ENCODE measurements at regions of chr19 and their contacts with region 1.

Region 1: DNA sequence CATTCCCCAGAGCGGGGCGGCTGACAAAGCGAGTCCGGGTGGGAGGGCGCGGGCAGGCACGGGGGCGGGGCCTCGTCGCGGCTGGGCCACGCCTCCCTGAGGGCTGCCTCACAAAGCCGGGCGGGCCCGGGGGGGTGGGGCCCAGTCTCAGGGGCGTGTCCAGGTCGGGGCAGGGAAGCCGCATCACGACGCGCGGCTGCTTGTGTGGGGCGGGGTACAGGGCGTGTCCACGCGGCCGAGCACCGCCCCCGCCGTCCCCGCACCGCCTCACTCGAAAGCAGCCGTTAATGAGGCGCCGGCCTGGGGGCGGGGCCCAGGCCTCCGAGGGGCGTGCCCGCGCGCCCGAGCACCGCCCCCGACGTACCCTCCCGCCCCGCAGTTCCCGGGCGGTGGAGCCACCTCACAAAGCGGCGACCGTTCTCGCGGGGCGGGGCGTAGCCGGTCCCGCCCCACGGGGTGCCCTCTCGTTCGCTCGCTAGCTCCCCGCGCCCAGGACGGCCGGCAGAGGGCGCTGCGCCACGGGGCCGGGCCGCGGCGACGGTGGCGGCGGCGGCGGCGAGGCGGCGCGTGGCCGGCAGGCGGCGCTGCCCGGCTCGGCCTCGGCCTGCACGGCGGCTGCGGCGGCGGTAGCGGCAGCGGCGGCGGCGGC is at the start of gene CARM1:
- DNase-seq: peak; percentile 99
- ATAC-seq: peak; percentile 83
- H3K4me3 ChIP-seq: peak within 1 kb of the TSS; percentile 41 to 79 (median 67)
- H3K4me3 Mint-ChIP-seq: peak within 1 kb of the TSS; percentile 86
- H3K27ac ChIP-seq: peak within 1 kb of the TSS; percentile 75 to 79
- H3K27ac Mint-ChIP-seq: peak within 1 kb of the TSS; percentile 85
- H3K4me1 ChIP-seq: peaks cover 33 to 46% of the 10 kb centered on the region in 2 donors
- H3K4me1 Mint-ChIP-seq: peaks cover 43% of the 10 kb centered on the region
- H3K27me3 ChIP-seq: no peaks in the 10 kb centered on the region
- H3K27me3 Mint-ChIP-seq: no peaks in the 10 kb centered on the region
- CTCF ChIP-seq: peak; percentile 55
- total RNA-seq, gene CARM1: 29.4 and 33.0 TPM in 2 replicates

Region 2: DNA sequence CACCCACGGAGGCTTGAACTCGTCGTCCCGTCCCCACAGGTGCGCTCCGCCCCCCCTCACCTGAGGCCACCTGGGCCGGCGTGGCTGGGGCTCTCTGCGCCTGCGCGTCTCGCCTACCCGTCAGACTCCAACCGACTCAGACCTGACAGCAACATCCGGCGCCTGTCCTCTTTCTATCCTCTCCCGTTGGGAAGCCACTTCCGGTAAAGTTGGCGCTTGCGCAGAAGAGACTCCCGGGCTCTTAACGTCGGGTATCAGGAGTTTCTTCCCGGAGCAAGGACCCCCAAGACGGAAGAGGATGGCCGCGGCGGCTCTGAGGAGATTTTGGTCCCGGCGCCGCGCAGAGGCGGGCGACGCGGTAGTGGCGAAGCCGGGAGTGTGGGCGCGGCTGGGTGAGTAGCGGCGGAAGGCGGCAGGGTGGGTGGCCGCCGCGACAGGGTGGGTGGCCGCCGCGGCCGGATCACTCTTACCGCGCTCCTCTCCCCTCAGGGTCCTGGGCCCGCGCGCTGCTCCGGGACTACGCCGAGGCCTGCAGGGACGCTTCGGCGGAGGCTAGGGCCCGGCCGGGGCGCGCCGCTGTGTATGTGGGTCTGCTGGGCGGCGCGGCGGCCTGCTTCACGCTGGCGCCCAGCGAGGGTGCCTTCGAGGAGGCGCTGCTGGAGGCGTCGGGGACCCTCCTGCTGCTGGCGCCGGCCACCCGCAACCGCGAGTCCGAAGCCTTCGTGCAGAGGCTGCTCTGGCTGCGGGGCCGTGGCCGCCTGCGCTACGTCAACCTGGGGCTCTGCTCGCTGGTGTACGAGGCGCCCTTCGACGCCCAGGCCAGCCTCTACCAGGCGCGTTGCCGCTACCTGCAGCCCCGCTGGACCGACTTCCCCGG is 57.7 kb after region 1 on chr19 and contains the starts of genes TIMM29 and YIPF2:
- CTCF ChIA-PET with region 1: interaction called, 3 read pairs
- POLR2A ChIA-PET with region 1: interaction called, 3 read pairs
- intact Hi-C with region 1: loop called (anchors 2 kb)
- DNase-seq: peak; percentile 92
- ATAC-seq: peak; percentile 82
- H3K4me3 ChIP-seq: peak within 1 kb of the TSS; percentile 54 to 94 (median 83)
- H3K4me3 Mint-ChIP-seq: peak within 1 kb of the TSS; percentile 93
- H3K27ac ChIP-seq: peak within 1 kb of the TSS; percentile 41 to 72
- H3K27ac Mint-ChIP-seq: peak within 1 kb of the TSS; percentile 90
- H3K4me1 ChIP-seq: peaks cover 13 to 24% of the 10 kb centered on the region in 2 donors
- H3K4me1 Mint-ChIP-seq: peaks cover 18% of the 10 kb centered on the region
- H3K27me3 ChIP-seq: no peaks in the 10 kb centered on the region
- H3K27me3 Mint-ChIP-seq: no peaks in the 10 kb centered on the region
- CTCF ChIP-seq: no peak
- total RNA-seq, gene TIMM29: 24.2 and 26.1 TPM in 2 replicates
- total RNA-seq, gene YIPF2: 19.8 and 21.9 TPM in 2 replicates

Region 3: DNA sequence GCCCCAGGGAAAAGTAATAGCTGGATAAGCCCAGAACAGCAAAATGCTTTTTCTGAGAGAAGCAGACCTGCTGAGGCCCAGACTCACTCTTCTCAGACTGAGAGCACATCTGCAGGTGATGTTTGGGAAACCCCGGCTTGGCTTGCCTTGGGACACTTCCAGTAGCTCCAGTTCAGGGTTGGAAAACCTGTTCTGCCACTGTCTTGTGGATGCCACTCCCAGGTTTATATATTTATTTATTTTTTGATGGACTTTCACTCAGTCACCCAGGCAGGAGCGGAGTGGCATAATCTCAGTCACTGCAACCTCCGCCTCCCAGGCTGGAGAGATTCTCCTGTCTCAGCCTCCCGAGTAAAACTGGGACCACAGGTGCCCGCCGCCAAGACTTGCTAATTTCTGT is 81.7 kb after region 1 on chr19:
- CTCF ChIA-PET with region 1: no interaction called
- POLR2A ChIA-PET with region 1: no interaction called
- intact Hi-C with region 1: no loop called
- DNase-seq: no peak
- ATAC-seq: no peak
- H3K4me3 ChIP-seq: no peak overlapping the region
- H3K4me3 Mint-ChIP-seq: no peak overlapping the region
- H3K27ac ChIP-seq: no peak overlapping the region
- H3K27ac Mint-ChIP-seq: no peak overlapping the region
- H3K4me1 ChIP-seq: no peaks in the 10 kb centered on the region
- H3K4me1 Mint-ChIP-seq: peaks cover 4% of the 10 kb centered on the region
- H3K27me3 ChIP-seq: no peaks in the 10 kb centered on the region
- H3K27me3 Mint-ChIP-seq: no peaks in the 10 kb centered on the region
- CTCF ChIP-seq: no peak

Region 4: GRCh38 chr19:11155373-11156120 is 284.5 kb after region 1 on chr19 and contains the start of gene SPC24:
- CTCF ChIA-PET with region 1: no interaction called
- POLR2A ChIA-PET with region 1: no interaction called
- intact Hi-C with region 1: loop called (anchors 10 kb)
- DNase-seq: peak; percentile 94
- ATAC-seq: peak; percentile 99
- H3K4me3 ChIP-seq: peak within 1 kb of the TSS; percentile 52 to 67 (median 64)
- H3K4me3 Mint-ChIP-seq: peak within 1 kb of the TSS; percentile 91
- H3K27ac ChIP-seq: no peak within 1 kb of the TSS
- H3K27ac Mint-ChIP-seq: peak within 1 kb of the TSS; percentile 81
- H3K4me1 ChIP-seq: peaks cover 10 to 14% of the 10 kb centered on the region in 2 donors
- H3K4me1 Mint-ChIP-seq: peaks cover 10% of the 10 kb centered on the region
- H3K27me3 ChIP-seq: peaks cover 0 to 4% (median 0%) of the 10 kb centered on the region in 4 experiments
- H3K27me3 Mint-ChIP-seq: no peaks in the 10 kb centered on the region
- CTCF ChIP-seq: no peak
- total RNA-seq, gene SPC24: 0.15 and 0.90 TPM in 2 replicates